ENCODE measurements at regions of chr3 and their contacts with region 1.

Region 1: DNA sequence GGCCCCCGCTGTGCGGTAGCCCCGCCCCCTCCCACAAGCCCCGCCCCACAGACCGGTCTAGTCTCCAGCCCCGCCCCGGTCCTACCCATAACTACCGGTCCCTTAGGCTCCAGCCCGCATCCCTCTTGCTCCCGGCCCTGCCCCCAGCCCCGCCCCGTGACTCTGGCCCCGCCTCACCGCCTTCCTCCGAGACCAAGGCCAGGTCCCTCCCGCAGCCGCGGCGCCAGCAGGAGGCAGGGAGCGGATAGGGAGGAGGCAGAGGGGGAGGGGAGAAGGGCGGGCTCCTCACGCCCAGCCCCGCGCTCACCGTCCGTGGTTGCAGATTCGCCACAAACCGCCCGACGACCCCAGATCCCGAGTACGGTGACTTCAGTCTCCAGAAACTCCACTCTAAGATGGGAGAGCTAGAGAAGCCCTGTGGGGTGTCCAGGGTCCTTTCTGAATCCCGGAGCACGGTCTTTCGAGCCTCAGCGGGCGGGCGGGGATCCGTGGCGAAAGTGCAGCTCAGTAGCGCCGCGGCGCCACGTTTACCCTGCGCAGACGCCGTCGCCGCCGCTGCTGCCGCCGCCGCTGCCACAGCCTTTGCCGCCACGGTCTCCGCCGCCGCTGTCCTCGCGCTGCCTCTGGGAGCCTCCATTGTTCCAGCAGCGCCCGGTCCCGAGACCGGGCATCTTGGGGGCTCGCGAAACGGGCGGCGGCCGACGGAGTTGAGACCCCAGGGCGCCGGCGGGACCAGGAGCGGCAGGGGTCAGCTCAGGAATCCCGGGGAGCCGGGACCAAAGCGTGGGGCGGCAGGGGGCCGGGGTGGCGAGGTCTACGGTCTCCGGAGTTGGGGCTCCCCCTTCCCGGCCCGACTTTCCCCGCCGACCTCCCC is at the start of gene BRPF1:
- DNase-seq: peak; percentile 94
- H3K4me3 ChIP-seq: peak within 1 kb of the TSS; percentile 93
- H3K27me3 ChIP-seq: no peaks in the 10 kb centered on the region
- CTCF ChIP-seq: peak; percentile 39; the same call in 1 of the 2 replicates
- polyA plus RNA-seq, gene BRPF1: 5.7 and 10.0 TPM in 2 replicates

Region 2: DNA sequence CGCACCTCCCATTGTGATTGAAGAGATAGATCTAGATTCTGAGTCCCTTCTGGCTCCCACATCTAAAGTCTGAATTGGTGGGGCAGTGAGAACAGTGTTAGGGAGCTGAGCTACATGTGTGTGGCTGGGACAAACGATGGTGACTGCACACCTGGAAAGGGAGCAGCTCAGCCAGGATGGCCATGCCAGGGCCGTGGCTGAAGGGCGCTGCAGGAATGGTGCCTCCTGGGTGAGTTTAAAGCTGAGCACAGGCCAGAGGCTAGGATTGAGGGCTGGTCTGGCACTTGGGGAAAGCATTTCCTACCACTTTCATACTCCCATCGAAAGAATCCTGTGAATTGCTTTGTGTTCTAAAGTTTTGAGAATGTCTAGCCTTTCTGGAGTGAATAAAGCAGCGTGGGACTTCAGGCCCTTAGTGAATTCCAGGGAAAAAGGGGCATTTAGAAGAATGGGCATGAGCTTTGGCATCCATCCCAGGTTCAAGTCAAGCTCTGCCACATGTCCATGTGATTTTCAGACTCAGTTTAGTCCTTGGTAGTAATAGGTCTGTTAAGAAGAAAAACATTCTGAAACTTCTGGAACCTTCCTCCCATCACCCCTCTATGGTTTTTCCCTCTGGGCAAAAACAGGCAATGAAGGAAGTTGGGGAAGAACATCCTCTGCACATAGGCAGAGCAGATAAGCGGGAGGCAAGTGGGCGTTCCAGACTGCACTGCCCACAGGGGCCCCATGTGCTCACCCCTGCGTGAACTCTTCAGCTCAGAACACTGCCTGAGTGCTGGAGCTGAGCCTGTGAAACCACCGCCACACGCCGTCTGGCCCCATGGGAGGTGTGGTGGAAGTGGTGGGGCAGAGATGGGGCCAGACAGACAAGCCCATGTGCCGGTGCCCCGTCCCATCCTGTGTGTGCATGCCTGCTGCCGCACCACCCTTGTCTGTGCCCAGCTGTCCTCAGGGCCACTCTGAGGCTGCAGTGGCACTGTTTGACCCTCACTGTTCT is 40.7 kb before region 1 on chr3:
- CTCF ChIA-PET with region 1: no interaction called
- POLR2A ChIA-PET with region 1: no interaction called
- DNase-seq: no peak
- H3K4me3 ChIP-seq: no peak overlapping the region
- H3K27me3 ChIP-seq: no peaks in the 10 kb centered on the region
- CTCF ChIP-seq: no peak

Region 3: DNA sequence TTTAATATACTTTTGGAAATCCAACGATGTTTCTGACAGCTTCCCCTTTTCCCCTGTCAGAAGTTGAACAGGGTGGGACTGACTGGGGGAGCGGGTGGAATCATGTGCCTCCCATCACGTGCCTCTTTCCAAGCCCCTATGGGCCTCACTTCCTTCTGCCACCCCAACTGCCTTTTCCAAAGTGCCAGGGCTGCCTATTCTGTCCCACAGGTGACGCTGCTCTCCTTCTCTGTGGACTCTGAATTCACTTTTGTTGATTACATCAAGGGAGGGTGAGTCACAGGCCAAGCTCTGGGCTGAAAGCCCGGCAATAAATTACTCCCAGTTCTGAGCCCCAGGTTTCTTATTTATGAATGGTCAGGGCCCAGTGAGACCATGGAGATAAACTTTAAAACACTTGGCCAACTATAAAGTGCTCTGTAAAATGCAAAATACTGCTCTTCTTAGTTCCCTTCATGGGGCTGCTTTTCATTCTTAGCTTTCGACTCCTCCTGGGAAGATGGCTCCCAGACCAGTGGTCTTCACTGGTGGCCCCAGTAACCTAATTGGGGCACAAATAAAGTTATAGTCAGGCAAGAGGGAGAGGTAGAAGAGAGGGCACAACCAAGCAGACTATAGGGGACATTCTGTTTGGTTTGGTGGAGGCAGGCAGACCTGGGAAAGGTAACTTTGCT is 15.5 kb before region 1 on chr3:
- CTCF ChIA-PET with region 1: interaction called, 22 read pairs
- POLR2A ChIA-PET with region 1: interaction called, 3 read pairs
- DNase-seq: peak; percentile 57
- H3K4me3 ChIP-seq: no peak overlapping the region
- H3K27me3 ChIP-seq: peaks cover 3% of the 10 kb centered on the region
- CTCF ChIP-seq: peak; percentile 86

Region 4: DNA sequence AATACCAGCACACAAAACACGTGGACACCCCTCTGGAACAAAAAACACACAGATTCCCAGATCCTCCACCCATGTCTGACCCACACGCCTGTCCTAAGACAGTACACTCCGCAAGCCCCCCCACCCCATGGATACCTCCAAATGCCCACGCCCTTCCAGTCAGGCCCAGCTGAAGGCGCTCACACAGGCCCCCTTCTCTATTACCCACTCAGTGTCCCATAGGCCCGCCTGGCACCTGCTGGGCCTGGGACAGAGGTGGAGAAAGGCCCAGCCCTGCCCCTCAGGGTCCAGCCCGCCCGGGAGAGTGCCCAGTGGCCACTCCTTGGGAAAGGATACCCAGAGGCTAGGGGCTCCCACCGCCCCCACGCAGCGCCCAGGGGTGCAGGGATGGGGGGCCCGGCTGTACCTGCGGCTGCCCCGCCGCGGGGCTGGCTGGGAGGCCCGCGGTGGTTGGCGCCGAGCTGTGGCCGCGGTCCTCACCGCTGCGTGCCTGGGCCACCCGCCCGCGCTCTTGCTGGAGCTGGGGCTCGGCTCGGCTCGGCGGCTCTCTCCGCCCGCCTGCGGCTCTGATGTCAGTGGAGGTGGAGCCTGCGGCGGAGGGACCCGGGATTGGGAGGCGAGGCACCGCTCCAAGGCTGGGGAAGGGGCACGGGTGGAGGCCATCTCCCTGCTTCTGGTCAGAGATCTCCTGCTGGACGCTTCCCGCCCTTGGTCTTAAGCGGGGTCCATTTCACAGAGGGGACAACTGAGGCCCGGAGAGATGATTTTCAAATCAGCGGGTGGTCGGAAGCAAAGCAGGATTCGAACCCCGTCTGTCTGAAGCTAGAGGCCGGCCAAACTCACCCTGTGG is 38.2 kb after region 1 on chr3 and contains the start of gene CAMK1:
- CTCF ChIA-PET with region 1: no interaction called
- POLR2A ChIA-PET with region 1: no interaction called
- DNase-seq: peak; percentile 8
- H3K4me3 ChIP-seq: peak within 1 kb of the TSS; percentile 69
- H3K27me3 ChIP-seq: no peaks in the 10 kb centered on the region
- CTCF ChIP-seq: no peak
- polyA plus RNA-seq, gene CAMK1: 21.6 and 32.6 TPM in 2 replicates